Sciatic nerve (tissue), 2 donors: ENCODE measurements at regions of chr2 and their contacts with region 1.

Region 1: GRCh38 chr2:171807831-171808393 is 86.1 kb downstream of the SLC25A12 start:
- DNase-seq: no peak
- ATAC-seq: peak; percentile 51

Region 2: DNA sequence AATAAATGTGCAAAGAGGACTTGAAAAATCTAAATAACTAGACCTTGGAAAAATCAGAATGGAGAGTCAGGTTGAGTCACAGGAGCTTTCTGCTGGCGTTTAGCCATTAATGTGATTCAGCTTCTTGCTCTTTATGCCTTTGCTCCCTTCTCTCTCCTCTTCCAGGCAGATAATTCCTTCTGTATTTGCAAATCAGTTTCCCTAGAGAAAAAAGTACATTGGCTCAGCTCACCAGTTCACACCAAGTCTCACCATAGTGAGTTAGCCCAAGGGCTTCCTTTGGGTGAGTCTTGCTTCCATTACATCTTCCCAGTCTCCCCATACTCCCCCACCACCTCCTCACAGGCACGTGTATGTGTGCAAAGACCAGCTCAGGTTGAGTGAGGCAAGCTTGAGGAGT is 212.0 kb before region 1 on chr2:
- intact Hi-C with region 1: no loop called
- DNase-seq: no peak
- ATAC-seq: no peak

Region 3: GRCh38 chr2:172102391-172103278 is 294.7 kb after region 1 on chr2 and contains the start of gene DLX2:
- intact Hi-C with region 1: loop called (anchors 10 kb)
- DNase-seq: peak; percentile 88
- ATAC-seq: peak; percentile 67
- total RNA-seq, gene DLX2: 0.27 TPM

Region 4: DNA sequence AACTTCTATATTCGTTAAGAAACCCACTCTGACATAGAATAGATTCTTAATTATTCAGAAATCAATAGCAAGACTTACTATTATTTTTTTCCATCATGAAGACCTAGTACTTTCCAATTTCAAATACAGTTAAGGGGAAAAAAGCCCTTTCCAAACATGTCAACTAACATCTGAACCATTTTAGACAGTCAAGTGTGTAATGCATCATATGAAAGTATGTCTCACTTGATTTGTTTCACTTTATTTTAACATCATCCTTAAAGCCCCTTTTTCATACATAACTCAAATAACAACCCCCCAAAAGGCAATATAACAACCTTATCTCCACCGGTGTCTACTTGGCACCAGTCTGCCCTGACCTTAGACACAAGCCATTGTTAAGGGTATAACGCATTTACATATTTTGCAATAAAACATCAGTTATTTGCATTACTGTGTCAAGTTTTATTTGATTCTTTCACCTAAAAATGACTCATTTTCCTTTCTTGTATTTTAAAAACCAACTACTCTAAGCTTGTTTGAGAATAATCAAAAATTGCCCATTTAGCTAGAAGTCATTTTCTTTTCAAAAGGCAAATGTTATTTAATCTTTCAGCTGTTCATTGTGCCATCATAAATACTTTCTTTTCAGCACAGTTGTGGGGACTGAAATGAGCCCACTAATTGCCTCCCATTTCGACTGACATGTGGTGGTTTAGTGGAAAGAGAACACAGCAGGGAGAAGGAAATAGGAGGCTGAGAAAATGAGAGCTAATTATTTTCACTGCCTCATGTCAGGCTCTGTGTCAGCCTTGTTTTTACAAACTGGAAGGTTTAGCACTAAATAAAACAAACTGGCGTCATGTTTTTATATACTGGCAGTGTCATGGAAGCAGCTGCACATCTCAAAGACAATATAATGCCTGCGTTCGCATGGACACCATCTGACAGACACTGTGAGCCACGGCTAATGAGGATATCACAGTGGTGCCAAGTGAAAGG is 1442.0 kb after region 1 on chr2:
- intact Hi-C with region 1: no loop called
- DNase-seq: no peak
- ATAC-seq: no peak